Prostate gland (tissue), 2 donors: ENCODE measurements at regions of chr11 and their contacts with region 1.

Region 1: DNA sequence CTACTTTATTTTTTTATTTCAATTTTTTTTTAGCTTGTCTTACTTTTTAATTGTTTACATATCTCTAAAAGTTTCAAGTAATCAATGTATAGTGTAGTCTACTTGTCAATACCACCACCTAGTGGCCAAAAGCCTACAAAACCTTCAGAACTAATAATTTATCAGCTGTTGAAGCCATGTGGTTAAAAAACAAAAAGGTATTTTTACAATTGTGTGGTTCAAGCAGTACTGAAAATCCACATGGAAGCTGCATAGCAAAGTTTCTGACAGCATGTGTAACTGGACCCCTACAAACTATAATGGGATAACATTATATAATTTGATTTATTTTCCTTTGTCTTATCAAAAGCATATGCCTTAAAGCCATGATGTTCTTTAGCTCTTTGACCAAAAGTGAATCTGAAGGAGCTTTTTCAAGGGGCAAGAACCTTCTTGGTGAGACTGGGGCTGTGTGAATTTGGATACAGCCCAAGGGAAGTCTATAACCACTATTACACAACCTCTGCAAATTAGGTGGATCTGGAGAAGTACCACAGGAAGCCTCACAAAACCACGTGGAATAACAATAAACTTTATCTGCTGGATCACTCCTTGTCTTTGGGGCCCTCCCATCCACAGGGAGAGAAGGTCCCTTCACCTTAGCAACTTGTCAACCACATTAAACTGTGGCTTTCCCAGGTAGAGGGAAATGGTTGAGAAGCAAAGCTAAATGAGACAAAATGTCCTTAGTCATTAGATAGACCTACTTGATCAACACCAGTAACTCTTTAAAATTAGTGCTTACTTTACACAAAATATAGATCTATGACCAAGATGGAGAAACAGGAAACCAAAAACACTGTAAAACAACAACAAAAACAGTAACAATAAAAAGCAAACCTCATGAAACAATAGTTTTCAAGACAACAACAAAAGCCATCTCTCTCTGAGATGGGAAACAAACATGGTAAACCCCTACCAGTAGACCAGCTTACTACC is 9.9 kb downstream of the NARS2 start:
- DNase-seq: peak; percentile 68
- H3K4me3 ChIP-seq: no peak overlapping the region
- H3K27ac ChIP-seq: no peak overlapping the region
- H3K4me1 ChIP-seq: peaks cover 6% of the 10 kb centered on the region
- H3K27me3 ChIP-seq: no peaks in the 10 kb centered on the region
- CTCF ChIP-seq: peak; percentile 63 to 84 (median 78)
- POLR2A ChIP-seq: no peak

Region 2: GRCh38 chr11:78139422-78140391 is 425.1 kb before region 1 on chr11 and contains the start of gene ALG8:
- intact Hi-C with region 1: loop called (anchors 5 kb)
- DNase-seq: peak; percentile 88
- H3K4me3 ChIP-seq: peak within 1 kb of the TSS; percentile 50 to 75
- H3K27ac ChIP-seq: peak within 1 kb of the TSS; percentile 59 to 70
- H3K4me1 ChIP-seq: peaks cover 4% of the 10 kb centered on the region
- H3K27me3 ChIP-seq: no peaks in the 10 kb centered on the region
- CTCF ChIP-seq: no peak
- POLR2A ChIP-seq: peak; percentile 57
- total RNA-seq, gene ALG8: 34.0 to 50.3 TPM

Region 3: DNA sequence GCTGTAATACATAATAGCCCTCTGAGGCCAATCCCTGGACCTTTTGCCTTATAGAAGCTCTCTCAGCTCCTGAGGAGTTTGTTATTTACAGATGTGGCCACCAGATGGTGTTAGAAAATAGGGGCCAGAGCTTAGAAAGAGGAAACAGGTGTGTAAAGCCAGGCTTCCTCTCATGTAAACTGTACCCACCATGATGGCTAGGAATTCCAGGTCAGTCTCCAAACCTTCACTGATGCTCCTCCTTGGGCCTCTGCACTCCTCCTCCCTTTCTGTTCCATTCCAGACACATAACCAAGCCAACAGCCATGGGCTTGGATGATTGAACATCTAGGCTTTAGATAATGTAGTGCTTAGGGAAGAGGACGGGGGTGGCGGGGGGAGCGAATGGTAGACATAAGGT is 336.3 kb before region 1 on chr11:
- intact Hi-C with region 1: loop called (anchors 2 kb)
- DNase-seq: no peak
- H3K4me3 ChIP-seq: no peak overlapping the region
- H3K27ac ChIP-seq: no peak overlapping the region
- H3K4me1 ChIP-seq: no peaks in the 10 kb centered on the region
- H3K27me3 ChIP-seq: no peaks in the 10 kb centered on the region
- CTCF ChIP-seq: peak in 2 of 4 experiments; percentile 50 to 52
- POLR2A ChIP-seq: no peak